Dendritic cell treated with granulocyte-macrophage colony-stimulating factor and Interleukin-4, amounts not matched to agents 40 ng/mL and 50 ng/mL, for 4 days (primary cell): ENCODE measurements at regions of chr6 and their contacts with region 1.

Region 1: DNA sequence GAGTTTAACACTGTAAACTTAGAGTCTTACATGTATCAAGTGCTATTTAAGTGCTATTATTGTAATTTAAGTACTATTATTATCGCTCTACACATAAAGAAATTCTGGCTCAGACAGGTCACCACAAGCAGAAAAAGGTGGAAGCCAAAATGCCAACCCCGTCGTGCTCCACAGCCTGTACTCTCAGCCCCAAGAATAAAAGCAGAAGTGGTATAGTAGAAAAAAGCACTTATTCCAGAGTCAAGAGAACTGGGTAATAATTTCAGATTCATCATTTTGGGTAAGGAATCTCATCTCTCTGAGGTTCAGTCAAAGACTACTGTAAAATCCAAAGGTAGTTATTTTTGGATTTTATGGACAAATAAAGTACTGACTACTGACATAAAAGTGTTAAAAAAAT is 943 bp downstream of the ZUP1 start:
- H3K4me3 Mint-ChIP-seq: peak overlapping the region; percentile 90
- H3K27ac Mint-ChIP-seq: peak overlapping the region; percentile 92
- H3K4me1 Mint-ChIP-seq: peaks cover 39% of the 10 kb centered on the region
- H3K27me3 Mint-ChIP-seq: peaks cover 5% of the 10 kb centered on the region

Region 2: GRCh38 chr6:115958958-115959357 is 708.7 kb before region 1 on chr6:
- intact Hi-C with region 1: no loop called
- H3K4me3 Mint-ChIP-seq: no peak overlapping the region
- H3K27ac Mint-ChIP-seq: no peak overlapping the region
- H3K4me1 Mint-ChIP-seq: no peaks in the 10 kb centered on the region
- H3K27me3 Mint-ChIP-seq: no peaks in the 10 kb centered on the region

Region 3: GRCh38 chr6:116253505-116254296 is 413.9 kb before region 1 on chr6 and contains the start of gene TSPYL4:
- intact Hi-C with region 1: loop called (anchors 5 kb)
- H3K4me3 Mint-ChIP-seq: no peak within 1 kb of the TSS
- H3K27ac Mint-ChIP-seq: no peak within 1 kb of the TSS
- H3K4me1 Mint-ChIP-seq: peaks cover 21% of the 10 kb centered on the region
- H3K27me3 Mint-ChIP-seq: no peaks in the 10 kb centered on the region

Region 4: DNA sequence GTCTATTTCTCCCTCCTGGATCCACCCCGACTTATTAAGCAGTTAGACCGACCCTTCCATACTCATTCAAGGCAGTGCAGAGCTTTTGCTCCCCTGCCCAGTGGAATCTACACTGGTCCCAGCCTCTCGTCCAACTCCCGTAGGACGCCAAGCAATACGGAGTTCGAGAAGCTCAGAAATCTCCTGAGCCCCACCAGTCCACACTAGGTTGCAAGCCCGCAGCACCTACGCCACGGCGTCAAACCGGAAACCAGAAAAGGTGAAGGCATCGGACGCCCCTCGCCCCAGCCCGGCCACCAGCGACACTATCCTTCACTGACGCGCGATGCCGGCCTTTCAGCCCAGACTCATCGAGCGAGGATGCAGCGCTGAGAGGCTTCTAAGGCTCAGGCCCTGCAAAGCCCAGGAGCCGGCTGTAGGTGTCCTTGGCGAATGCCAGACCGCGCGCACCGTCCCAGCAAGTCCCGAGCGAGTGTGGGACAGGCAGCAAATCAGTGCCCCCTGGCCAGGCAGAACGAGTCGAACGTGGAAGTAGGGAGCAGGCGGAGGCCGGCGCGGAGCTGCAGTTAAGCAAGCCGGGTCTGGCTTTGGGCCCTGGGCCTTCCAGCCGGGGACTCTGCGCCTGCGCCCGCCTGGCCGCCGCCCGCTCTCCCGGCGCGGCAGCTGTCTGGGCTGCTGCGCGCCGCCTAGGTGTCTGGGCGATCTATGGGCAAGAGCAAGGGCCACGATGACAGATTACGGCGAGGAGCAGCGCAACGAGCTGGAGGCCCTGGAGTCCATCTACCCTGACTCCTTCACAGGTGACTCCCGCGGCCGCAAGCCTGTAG is 96.6 kb before region 1 on chr6 and contains the start of gene RWDD1:
- intact Hi-C with region 1: loop called (anchors 5 kb)
- H3K4me3 Mint-ChIP-seq: peak within 1 kb of the TSS; percentile 97
- H3K27ac Mint-ChIP-seq: peak within 1 kb of the TSS; percentile 94
- H3K4me1 Mint-ChIP-seq: peaks cover 45% of the 10 kb centered on the region
- H3K27me3 Mint-ChIP-seq: no peaks in the 10 kb centered on the region